Mammary epithelial cell (primary cell): ENCODE measurements at regions of chr3 and their contacts with region 1.

Region 1: GRCh38 chr3:126245811-126246727 is 65.7 kb upstream of the ALDH1L1 start:
- DNase-seq: no peak
- H3K4me3 ChIP-seq: no peak overlapping the region
- H3K27ac ChIP-seq: no peak overlapping the region
- H3K4me1 ChIP-seq: no peaks in the 10 kb centered on the region
- H3K27me3 ChIP-seq: no peaks in the 10 kb centered on the region
- CTCF ChIP-seq: peak; percentile 56 to 73

Region 2: GRCh38 chr3:126197854-126198584 is 48.0 kb before region 1 on chr3:
- CTCF ChIA-PET with region 1: interaction called, 4 read pairs
- dilution Hi-C with region 1: no loop called
- in situ Hi-C with region 1: no loop called
- intact Hi-C with region 1: loop called (anchors 1 kb)
- DNase-seq: peak; percentile 46
- H3K4me3 ChIP-seq: no peak overlapping the region
- H3K27ac ChIP-seq: no peak overlapping the region
- H3K4me1 ChIP-seq: no peaks in the 10 kb centered on the region
- H3K27me3 ChIP-seq: no peaks in the 10 kb centered on the region
- CTCF ChIP-seq: peak; percentile 87 to 92